ENCODE measurements at regions of chr18 and their contacts with region 1.

Region 1: DNA sequence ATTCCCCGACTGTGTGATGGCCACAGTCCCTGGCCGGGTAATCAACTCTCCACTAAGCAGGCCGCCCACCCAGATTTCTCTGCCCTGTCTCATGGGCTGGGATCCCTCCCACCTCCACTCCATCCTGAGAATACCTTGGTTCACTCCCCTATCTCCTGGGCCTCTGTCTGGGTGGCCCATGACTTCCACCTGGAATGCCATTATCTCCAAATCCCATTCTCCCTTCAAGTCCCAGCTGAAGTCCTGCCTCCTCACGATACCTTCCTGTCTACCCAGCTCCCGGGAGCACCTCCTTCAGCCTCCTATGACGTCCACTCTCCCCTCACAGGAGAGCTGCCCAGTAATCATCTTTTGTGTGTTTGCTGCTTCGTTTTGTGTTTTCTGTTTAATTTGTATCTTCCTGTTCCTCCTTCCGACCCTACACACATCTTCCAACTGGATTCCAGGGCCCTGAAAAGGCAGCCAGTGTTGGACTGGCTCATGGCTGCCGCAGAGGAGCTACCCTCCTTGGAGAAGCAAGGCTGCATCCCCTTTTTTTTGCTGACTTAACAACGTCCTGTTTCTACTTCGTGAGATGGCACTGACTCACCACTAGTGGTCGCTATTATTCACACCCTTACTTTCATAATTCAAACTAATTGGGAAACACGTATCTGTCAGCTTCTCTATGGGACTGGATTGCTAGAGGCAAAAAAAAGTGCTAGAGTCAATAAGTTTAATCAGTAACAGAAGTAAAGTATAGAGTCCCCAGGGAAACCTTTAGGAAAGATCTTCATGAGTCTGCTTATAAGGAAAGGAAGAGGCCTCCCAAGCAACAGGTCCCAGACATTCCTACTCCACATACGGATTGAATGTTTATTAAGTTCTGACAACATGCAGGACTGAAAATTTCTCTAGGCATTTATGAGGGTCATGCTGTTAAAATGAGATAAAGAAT is 171.9 kb upstream of the GATA6 start:
- DNase-seq: no peak
- ATAC-seq: peak; percentile 86 to 90
- H3K4me3 ChIP-seq: no peak overlapping the region
- H3K27ac ChIP-seq: no peak overlapping the region
- H3K4me1 ChIP-seq: no peaks in the 10 kb centered on the region
- H3K27me3 ChIP-seq: no peaks in the 10 kb centered on the region
- CTCF ChIP-seq: peak; percentile 79

Region 2: DNA sequence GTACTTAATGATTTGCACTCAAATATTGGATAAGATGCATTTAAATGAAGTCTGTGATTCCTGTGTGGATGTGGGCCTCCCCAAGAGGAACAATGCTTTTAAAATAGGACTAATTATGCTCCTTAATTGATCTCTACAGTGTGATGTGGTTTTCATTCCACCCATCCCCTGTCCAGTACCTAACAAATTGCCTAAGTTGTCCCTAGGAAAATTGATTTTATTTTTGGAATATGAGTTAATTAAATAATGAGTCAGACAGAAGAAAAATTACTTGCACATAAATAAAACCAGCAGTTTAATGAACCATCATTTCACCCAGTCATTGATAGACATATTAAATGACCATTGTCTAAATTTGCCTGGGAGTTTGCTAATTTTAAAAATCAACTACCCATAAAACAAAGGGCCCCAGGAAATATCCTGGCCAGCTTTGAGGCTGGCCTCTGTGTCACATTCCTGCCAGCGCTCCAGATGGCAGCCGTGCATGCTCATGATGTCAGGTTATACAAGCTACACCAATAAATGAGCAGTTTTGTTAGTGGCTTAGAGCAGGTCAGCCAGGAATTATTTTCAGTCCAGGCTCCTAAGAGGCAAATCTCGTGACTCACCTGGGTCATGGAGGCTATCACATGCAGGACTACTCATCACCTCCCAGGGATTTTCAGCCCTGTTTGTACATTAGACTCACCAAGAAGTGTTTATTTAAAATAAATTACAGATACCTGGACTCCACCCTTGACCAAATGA is 324.8 kb before region 1 on chr18:
- intact Hi-C with region 1: no loop called
- DNase-seq: no peak
- ATAC-seq: no peak
- H3K4me3 ChIP-seq: no peak overlapping the region
- H3K27ac ChIP-seq: no peak overlapping the region
- H3K4me1 ChIP-seq: no peaks in the 10 kb centered on the region
- H3K27me3 ChIP-seq: no peaks in the 10 kb centered on the region
- CTCF ChIP-seq: no peak

Region 3: DNA sequence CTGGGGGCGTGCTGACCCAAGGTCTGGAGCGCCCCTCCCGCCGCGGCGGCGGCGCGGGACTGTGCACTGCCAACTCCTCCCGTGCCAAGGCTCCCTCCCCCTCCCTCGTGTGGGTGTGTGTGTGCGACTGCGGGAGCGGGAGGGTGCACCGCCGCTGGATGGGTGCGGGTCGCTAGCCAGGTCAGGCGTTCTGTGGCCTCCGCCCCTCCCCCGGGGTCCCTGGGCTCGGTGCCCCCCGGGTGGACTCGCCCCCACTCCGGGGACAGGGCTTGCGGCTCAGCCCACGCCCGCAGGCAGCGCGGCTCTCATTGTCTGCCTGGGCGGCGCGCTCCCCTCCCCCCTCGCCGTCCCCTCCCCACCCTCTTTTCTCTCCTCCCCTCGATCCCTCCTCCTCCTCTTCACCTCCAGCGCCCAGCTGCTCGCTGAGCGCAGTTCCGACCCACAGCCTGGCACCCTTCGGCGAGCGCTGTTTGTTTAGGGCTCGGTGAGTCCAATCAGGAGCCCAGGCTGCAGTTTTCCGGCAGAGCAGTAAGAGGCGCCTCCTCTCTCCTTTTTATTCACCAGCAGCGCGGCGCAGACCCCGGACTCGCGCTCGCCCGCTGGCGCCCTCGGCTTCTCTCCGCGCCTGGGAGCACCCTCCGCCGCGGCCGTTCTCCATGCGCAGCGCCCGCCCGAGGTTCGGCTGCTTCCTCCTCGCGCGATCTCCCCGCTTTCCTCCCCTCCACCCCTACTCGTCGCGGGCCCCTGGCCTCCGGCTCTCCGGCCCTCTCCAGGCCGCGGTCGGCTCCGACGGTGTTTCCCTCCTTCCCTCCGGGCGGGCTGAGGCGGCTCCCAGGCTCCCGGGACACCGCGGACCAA is 171.8 kb after region 1 on chr18 and contains the start of gene GATA6:
- intact Hi-C with region 1: loop called (anchors 10 kb)
- DNase-seq: peak; percentile 94
- ATAC-seq: peak; percentile 86 to 90
- H3K4me3 ChIP-seq: peak within 1 kb of the TSS; percentile 79
- H3K27ac ChIP-seq: peak within 1 kb of the TSS; percentile 97
- H3K4me1 ChIP-seq: peaks cover 20% of the 10 kb centered on the region
- H3K27me3 ChIP-seq: peaks cover 70% of the 10 kb centered on the region
- CTCF ChIP-seq: peak; percentile 50
- total RNA-seq, gene GATA6: 22.1 TPM